ENCODE measurements at regions of chr9 and their contacts with region 1.

Region 1: GRCh38 chr9:114611516-114612271 is 603 bp downstream of the TMEM268 start:
- DNase-seq: no peak
- ATAC-seq: peak; percentile 61
- H3K4me3 ChIP-seq: peak overlapping the region; percentile 86 to 98 (median 88)
- H3K4me3 Mint-ChIP-seq: peak overlapping the region; percentile 95
- H3K27ac ChIP-seq: peak overlapping the region; percentile 82 to 89
- H3K27ac Mint-ChIP-seq: peak overlapping the region; percentile 84
- H3K4me1 ChIP-seq: peaks cover 65 to 73% of the 10 kb centered on the region in 2 donors
- H3K4me1 Mint-ChIP-seq: peaks cover 69% of the 10 kb centered on the region
- H3K27me3 ChIP-seq: no peaks in the 10 kb centered on the region
- H3K27me3 Mint-ChIP-seq: no peaks in the 10 kb centered on the region
- CTCF ChIP-seq: no peak

Region 2: GRCh38 chr9:114559830-114560513 is 51.7 kb before region 1 on chr9:
- CTCF ChIA-PET with region 1: no interaction called
- POLR2A ChIA-PET with region 1: no interaction called
- intact Hi-C with region 1: loop called (anchors 10 kb)
- DNase-seq: peak; percentile 33
- ATAC-seq: peak; percentile 21
- H3K4me3 ChIP-seq: no peak overlapping the region
- H3K4me3 Mint-ChIP-seq: no peak overlapping the region
- H3K27ac ChIP-seq: peak overlapping the region in 1 of 2 donors; percentile 24
- H3K27ac Mint-ChIP-seq: no peak overlapping the region
- H3K4me1 ChIP-seq: peaks cover 12 to 14% of the 10 kb centered on the region in 2 donors
- H3K4me1 Mint-ChIP-seq: peaks cover 39% of the 10 kb centered on the region
- H3K27me3 ChIP-seq: no peaks in the 10 kb centered on the region
- H3K27me3 Mint-ChIP-seq: no peaks in the 10 kb centered on the region
- CTCF ChIP-seq: no peak